ENCODE measurements at regions of chr6 and their contacts with region 1.

Region 1: GRCh38 chr6:111011360-111012142 is 29.7 kb downstream of the RPF2 start:
- DNase-seq: peak; percentile 13
- H3K4me3 ChIP-seq: no peak overlapping the region
- H3K27me3 ChIP-seq: no peaks in the 10 kb centered on the region
- CTCF ChIP-seq: peak; percentile 70

Region 2: DNA sequence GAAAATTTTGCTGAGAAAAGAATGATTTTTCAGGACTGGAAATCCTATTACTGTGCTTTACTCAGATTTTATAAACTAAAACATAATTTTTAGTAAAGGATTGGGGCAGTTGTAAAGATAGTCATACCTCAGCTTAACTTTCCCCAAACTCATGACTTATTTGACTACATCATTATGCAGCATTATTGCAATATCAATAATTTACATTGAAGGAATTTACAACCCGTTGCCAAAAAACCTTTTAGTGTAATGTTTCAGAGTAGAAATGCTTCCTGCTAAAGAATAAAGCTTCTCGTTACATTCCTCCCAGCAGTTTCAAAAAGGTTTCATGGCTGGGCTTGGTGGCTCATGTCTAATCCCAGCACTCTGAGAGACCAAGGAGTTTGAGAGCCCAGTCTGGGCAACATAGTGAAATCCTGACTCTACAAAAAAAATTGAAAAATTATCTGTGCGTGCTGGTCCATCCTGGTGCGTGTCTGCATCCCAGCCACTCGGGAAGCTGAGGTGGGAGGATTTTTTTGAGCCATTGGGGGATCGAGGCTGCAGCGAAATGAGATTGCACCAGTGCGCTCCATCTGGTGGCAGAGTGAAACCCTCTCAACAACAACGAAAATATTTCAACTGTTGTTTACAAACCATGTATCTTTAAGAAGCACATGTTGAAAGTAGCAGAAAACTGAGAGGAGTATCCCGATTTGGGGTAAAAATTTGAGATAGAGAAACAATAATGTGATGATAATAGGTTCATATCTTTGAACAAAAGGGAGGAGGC is 132.6 kb before region 1 on chr6:
- CTCF ChIA-PET with region 1: no interaction called
- POLR2A ChIA-PET with region 1: no interaction called
- DNase-seq: no peak
- H3K4me3 ChIP-seq: peak overlapping the region; percentile 11
- H3K27me3 ChIP-seq: no peaks in the 10 kb centered on the region
- CTCF ChIP-seq: peak; percentile 63

Region 3: DNA sequence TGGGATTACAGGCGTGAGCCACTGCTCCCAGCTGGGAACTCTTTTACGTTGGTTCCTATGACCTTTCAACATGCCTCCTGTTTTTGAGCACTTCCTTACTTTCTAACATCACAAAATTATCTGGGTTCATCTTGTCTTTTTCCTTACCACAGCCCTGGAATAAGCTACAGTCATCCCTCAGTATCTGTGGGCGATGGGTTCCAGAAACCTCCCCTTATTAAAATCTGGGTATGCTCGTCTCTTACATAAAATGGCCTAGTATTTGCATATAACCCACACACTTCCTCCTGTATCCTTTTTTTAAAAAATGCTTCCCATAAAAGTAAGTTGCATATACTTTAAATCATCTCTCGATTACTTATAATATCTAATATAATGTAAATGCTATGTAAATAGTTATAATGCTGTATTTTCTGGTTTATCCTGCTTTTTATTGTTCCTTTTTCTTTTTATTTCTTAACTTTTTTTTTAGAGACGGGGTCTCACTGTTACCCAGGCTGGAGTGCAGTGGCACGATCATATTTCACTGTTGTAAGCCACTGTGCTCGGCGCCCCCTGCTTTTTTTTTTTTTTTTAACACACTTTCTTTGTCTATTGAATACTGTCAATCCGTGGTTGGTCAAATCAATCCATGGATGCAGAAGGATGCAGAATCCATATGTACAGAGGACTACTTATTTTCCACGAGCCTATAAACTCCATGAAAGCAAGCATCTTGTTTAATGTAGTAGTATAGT is 20.5 kb before region 1 on chr6:
- CTCF ChIA-PET with region 1: interaction called, 18 read pairs
- POLR2A ChIA-PET with region 1: no interaction called
- DNase-seq: no peak
- H3K4me3 ChIP-seq: no peak overlapping the region
- H3K27me3 ChIP-seq: no peaks in the 10 kb centered on the region
- CTCF ChIP-seq: no peak

Region 4: GRCh38 chr6:111024681-111025080 is 13.1 kb after region 1 on chr6:
- CTCF ChIA-PET with region 1: interaction called, 12 read pairs
- POLR2A ChIA-PET with region 1: no interaction called
- DNase-seq: no peak
- H3K4me3 ChIP-seq: no peak overlapping the region
- H3K27me3 ChIP-seq: no peaks in the 10 kb centered on the region
- CTCF ChIP-seq: no peak

Region 5: GRCh38 chr6:111050261-111051023 is 38.9 kb after region 1 on chr6:
- CTCF ChIA-PET with region 1: no interaction called
- POLR2A ChIA-PET with region 1: no interaction called
- DNase-seq: no peak
- H3K4me3 ChIP-seq: no peak overlapping the region
- H3K27me3 ChIP-seq: no peaks in the 10 kb centered on the region; the same call in 1 of the 2 replicates
- CTCF ChIP-seq: no peak

Region 6: GRCh38 chr6:111259089-111259831 is 247.7 kb after region 1 on chr6:
- CTCF ChIA-PET with region 1: interaction called, 11 read pairs
- POLR2A ChIA-PET with region 1: no interaction called
- DNase-seq: peak; percentile 95
- H3K4me3 ChIP-seq: peak overlapping the region; percentile 74
- H3K27me3 ChIP-seq: peaks cover 2% of the 10 kb centered on the region; the same call in 1 of the 2 replicates
- CTCF ChIP-seq: peak; percentile 94

Measured in BJ (cell line).